Esophagus muscularis mucosa (tissue), 4 donors: ENCODE measurements at regions of chr2 and their contacts with region 1.

Region 1: DNA sequence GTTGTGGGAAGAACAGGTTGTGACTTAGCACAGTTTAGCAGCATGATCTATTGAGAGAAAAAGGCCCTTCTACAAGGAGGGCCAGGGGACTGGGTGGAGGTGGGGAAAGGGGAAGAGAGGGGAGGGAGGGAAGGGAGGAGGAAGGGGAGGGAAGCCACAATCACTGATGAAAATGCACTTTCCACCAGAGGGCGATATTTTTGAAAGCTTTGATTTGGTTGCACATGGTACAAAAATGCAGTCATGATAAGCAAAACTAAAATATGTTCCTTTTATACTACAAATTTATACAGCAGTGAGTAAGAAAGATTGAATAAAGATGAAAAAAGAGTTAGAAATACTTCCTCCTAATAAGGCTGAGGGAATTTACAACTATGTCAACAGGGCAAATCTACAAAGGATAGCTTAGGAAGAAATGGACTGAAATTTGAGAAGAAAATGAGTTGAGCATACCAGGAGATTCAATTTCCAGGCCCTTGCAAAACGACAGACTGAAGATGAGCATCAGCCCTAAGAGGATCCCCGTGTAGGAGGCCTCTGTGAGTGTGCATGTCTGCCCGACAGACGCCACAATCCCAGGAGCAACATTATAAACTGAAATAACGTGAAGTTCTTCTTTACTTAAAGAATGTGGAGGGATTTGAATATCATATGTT is 17.2 kb downstream of the SH3YL1 start:
- DNase-seq: no peak
- H3K4me3 ChIP-seq: no peak overlapping the region
- H3K27ac ChIP-seq: no peak overlapping the region
- H3K4me1 ChIP-seq: no peaks in the 10 kb centered on the region
- H3K27me3 ChIP-seq: no peaks in the 10 kb centered on the region
- CTCF ChIP-seq: peak; percentile 40 to 63 (median 55)
- EP300 ChIP-seq: no peak
- POLR2A ChIP-seq: no peak

Region 2: DNA sequence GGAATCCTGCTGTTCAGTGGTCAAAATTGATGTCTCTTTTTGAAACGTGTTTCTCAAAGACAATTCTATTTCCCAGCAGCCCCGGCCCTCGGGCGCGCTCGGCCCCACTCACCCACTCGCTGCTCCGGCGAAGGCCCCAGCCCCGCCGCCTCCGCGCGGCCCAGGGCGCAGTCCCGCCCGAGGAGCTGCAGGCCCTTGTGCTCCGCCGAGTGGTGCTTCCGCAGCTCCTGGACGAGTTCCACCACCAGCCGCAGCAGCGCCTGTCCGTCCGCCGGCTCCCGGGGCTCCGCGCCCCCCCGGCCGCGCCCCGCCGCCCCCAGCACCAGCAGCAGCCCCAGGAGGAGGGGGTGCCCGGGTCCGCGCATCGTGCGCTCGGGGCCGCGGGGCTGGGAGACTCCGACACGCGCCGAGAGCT is 40.9 kb after region 1 on chr2:
- intact Hi-C with region 1: loop called (anchors 5 kb)
- DNase-seq: no peak
- H3K4me3 ChIP-seq: peak overlapping the region; percentile 48 to 62 (median 52)
- H3K27ac ChIP-seq: no peak overlapping the region
- H3K4me1 ChIP-seq: peaks cover 23 to 37% (median 36%) of the 10 kb centered on the region in 4 donors
- H3K27me3 ChIP-seq: peaks cover 4 to 57% (median 21%) of the 10 kb centered on the region in 4 donors
- CTCF ChIP-seq: no peak
- EP300 ChIP-seq: no peak
- POLR2A ChIP-seq: no peak

Region 3: DNA sequence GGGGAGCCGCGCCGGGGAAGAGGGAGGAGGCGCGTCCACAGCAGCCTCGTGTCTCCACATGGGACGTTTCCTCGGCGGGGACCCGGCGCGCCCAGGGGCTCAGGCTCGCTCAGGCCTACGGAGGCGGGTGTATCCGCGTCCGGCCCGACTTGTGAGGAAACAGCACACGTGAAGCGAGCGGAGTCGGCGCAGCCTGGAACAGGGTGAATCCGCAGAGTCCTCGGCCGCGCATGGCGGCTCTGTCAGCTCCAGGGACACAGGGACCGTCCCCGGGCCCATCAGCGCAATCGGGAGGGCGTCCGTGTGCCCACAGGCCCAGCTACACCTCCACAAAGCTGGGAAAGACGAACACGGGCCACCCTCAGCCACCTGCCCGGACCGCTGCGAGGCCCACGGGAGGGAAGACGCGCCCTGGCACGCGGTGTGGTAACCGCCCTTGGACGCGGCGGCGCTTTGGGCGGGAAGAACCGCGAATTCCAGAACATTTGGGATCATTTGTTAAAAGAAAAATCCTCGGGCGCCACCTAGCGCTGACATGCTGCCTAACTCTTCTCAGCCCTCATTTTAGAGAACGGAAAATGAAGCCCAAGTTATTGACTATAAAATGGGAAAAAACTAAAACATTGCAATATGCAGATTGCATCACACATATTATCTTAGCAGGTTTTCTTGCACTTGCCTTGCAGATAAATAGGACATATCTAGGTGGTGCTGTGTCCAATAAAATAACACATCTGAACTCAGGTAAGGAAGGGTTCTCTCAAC is 390.2 kb after region 1 on chr2:
- intact Hi-C with region 1: loop called (anchors 5 kb)
- DNase-seq: peak; percentile 92
- H3K4me3 ChIP-seq: peak overlapping the region; percentile 36 to 41 (median 39)
- H3K27ac ChIP-seq: no peak overlapping the region
- H3K4me1 ChIP-seq: peaks cover 4 to 11% (median 9%) of the 10 kb centered on the region in 4 donors
- H3K27me3 ChIP-seq: peaks cover 0 to 17% (median 0%) of the 10 kb centered on the region in 4 donors
- CTCF ChIP-seq: peak; percentile 79 to 90 (median 80)
- EP300 ChIP-seq: no peak
- POLR2A ChIP-seq: no peak